ENCODE measurements at regions of chr1 and their contacts with region 1.

Region 1: GRCh38 chr1:153677718-153678505 is 576 bp upstream of the NPR1 start:
- H3K4me3 ChIP-seq: peak overlapping the region; percentile 42
- H3K27ac ChIP-seq: no peak overlapping the region
- H3K4me1 ChIP-seq: no peaks in the 10 kb centered on the region; the same call in 1 of the 2 replicates
- CTCF ChIP-seq: peak; percentile 92

Region 2: GRCh38 chr1:153734396-153735089 is 56.6 kb after region 1 on chr1:
- CTCF ChIA-PET with region 1: interaction called, 12 read pairs
- POLR2A ChIA-PET with region 1: no interaction called
- H3K4me3 ChIP-seq: no peak overlapping the region
- H3K27ac ChIP-seq: no peak overlapping the region
- H3K4me1 ChIP-seq: 0 out of 2 replicates have a peak, but pooled peaks cover 3% of the 10 kb centered on the region
- CTCF ChIP-seq: no peak

Region 3: GRCh38 chr1:153742411-153743142 is 64.7 kb after region 1 on chr1:
- CTCF ChIA-PET with region 1: interaction called, 55 read pairs
- POLR2A ChIA-PET with region 1: no interaction called
- H3K4me3 ChIP-seq: no peak overlapping the region
- H3K27ac ChIP-seq: no peak overlapping the region
- H3K4me1 ChIP-seq: no peaks in the 10 kb centered on the region
- CTCF ChIP-seq: no peak

Region 4: DNA sequence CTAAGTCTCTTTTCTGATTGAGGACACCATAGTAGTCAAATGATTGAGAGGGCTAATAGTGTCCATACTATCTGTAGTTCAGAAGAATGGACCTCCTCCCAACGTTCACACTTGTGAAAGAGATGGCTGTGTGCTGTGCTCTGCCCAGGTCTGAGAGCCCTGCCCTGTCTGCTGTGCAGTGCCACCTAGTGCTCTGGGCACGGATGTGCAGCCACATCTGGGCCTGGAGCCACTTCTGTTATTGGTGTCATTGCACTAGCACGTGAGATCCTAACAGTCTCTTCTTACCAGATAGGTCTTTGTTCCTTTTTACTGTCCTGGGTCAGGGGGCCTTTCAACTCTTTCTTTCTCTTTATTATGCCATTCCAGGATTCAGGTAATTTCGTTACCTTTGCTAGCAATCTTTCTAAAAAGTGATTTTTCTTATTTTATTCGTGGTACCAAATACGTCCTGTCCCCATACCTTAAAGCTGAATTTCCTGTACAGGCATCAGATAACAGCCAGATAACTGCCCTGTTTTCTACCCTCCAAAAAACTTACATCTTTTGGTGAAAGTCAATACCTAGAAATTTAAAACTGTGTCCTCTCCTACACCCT is 71.6 kb after region 1 on chr1:
- CTCF ChIA-PET with region 1: interaction called, 55 read pairs
- POLR2A ChIA-PET with region 1: no interaction called
- H3K4me3 ChIP-seq: no peak overlapping the region
- H3K27ac ChIP-seq: no peak overlapping the region
- H3K4me1 ChIP-seq: no peaks in the 10 kb centered on the region
- CTCF ChIP-seq: peak; percentile 82

Measured in HEK293 (cell line).